ENCODE measurements at regions of chr12 and their contacts with region 1.

Region 1: DNA sequence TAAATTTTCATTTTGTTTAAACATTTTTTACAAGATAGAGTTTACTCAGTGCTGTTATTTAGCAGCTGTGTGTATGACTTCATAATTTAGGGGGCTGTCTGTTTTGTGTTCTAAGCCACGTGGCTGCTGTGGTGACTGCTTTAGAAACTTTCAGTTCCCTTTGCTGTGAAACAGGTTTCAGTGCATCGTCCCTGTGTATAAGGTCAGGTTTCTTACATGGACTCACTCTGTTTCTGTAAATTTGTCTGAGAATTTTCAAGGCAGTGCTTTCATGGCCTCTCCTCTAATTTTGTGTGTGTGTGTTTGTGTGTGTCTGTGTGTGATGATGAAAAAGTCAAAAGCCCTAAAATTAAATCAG is 32.4 kb downstream of the BICD1 start:
- DNase-seq: peak; percentile 16
- H3K4me3 Mint-ChIP-seq: peak overlapping the region; percentile 47
- H3K27ac Mint-ChIP-seq: no peak overlapping the region
- H3K4me1 Mint-ChIP-seq: peaks cover 24% of the 10 kb centered on the region
- H3K27me3 Mint-ChIP-seq: peaks cover 56% of the 10 kb centered on the region

Region 2: DNA sequence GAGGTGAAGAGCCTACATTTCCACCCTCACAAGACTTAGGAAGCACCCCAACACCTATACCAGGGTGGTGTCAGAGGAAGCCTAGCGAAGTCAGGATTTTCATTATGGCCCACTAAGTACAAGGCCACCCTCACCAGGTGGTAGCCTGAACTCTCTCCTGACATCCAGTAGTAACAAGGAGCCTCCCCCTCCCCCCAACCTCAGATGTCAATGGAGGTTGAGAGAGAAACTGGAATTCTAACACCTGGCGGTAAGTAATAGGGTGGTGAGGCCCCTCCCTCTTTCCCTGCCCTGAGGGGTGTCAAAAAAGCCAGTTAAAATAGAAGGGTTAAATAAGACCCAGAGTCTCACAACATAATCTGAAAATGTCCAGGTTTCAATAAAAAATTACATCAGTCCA is 850.7 kb before region 1 on chr12:
- intact Hi-C with region 1: no loop called
- DNase-seq: no peak
- H3K4me3 Mint-ChIP-seq: no peak overlapping the region
- H3K27ac Mint-ChIP-seq: no peak overlapping the region
- H3K4me1 Mint-ChIP-seq: peaks cover 7% of the 10 kb centered on the region
- H3K27me3 Mint-ChIP-seq: no peaks in the 10 kb centered on the region

Region 3: DNA sequence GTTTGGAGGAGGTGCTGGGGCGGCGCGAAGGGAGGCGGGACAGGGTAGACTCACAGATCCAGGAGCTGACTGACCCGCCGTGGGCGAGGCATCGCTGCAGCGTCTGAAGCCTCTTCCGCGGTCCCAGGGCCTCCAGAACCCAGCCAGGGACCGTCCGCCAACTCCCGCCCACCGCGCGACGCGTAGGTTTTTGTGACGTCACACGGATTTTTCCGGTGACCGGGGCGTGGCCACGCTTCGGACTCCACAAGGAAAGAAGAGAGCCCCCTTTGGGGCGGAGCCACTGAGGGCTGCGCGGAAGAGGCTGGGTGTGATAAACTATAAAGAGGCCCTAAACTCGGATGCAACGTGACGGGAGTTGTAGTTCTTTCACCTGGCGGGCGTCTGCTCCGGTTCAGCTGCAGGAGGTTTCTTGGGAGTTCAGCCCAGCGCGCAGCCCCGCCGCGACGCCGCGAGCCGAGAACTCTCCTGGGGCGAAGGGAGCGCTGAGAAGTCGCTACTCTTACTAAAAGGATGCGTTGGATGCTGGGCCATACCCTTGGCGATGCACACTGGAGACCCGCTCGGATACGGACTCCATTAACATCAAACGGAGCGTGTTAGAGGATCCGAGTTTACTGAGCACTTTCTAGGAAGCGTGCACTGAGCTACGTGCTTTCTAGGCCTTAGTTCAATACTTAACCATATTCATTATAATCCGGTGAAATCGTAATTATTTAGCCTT is 410.0 kb before region 1 on chr12 and contains the start of gene AMN1:
- intact Hi-C with region 1: loop called (anchors 10 kb)
- DNase-seq: peak; percentile 100
- H3K4me3 Mint-ChIP-seq: peak within 1 kb of the TSS; percentile 98
- H3K27ac Mint-ChIP-seq: peak within 1 kb of the TSS; percentile 99
- H3K4me1 Mint-ChIP-seq: peaks cover 35% of the 10 kb centered on the region
- H3K27me3 Mint-ChIP-seq: no peaks in the 10 kb centered on the region
- total RNA-seq, gene AMN1: 1.8 and 2.8 TPM in 2 replicates

Region 4: GRCh38 chr12:31804185-31804504 is 334.9 kb before region 1 on chr12:
- intact Hi-C with region 1: loop called (anchors 10 kb)
- DNase-seq: no peak
- H3K4me3 Mint-ChIP-seq: peak overlapping the region; percentile 30
- H3K27ac Mint-ChIP-seq: peak overlapping the region; percentile 40
- H3K4me1 Mint-ChIP-seq: peaks cover 28% of the 10 kb centered on the region
- H3K27me3 Mint-ChIP-seq: peaks cover 3% of the 10 kb centered on the region

Region 5: GRCh38 chr12:32069071-32069470 is 70.0 kb before region 1 on chr12:
- intact Hi-C with region 1: loop called (anchors 10 kb)
- DNase-seq: no peak
- H3K4me3 Mint-ChIP-seq: no peak overlapping the region
- H3K27ac Mint-ChIP-seq: no peak overlapping the region
- H3K4me1 Mint-ChIP-seq: no peaks in the 10 kb centered on the region
- H3K27me3 Mint-ChIP-seq: peaks cover 5% of the 10 kb centered on the region

Region 6: DNA sequence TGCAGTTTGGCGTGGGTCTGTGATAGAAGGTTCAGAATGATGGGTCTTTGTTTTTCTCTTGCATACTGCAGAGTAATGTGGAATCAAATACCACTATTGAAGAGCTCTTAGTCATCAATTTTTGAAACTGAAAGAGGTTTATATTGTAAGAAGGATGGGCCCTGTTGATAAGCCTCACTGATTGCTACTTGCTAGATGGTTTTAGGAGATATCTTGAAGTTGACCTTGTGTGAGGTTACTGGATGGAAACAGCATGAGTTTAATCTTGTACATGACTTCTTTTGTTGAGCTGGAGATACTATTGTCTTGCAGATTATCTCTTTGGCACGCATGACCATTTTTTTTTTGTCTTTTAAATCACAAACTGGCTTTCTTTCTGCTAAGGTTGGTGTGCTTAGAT is 18.6 kb before region 1 on chr12:
- intact Hi-C with region 1: loop called (anchors 1 kb)
- DNase-seq: no peak
- H3K4me3 Mint-ChIP-seq: no peak overlapping the region
- H3K27ac Mint-ChIP-seq: no peak overlapping the region
- H3K4me1 Mint-ChIP-seq: peaks cover 10% of the 10 kb centered on the region
- H3K27me3 Mint-ChIP-seq: peaks cover 25% of the 10 kb centered on the region

Region 7: GRCh38 chr12:32302218-32303173 is 163.5 kb after region 1 on chr12:
- intact Hi-C with region 1: no loop called
- DNase-seq: no peak
- H3K4me3 Mint-ChIP-seq: no peak overlapping the region
- H3K27ac Mint-ChIP-seq: no peak overlapping the region
- H3K4me1 Mint-ChIP-seq: no peaks in the 10 kb centered on the region
- H3K27me3 Mint-ChIP-seq: no peaks in the 10 kb centered on the region